ENCODE measurements at regions of chr3 and their contacts with region 1.

Region 1: GRCh38 chr3:45656575-45657363 is 32.4 kb upstream of the SACM1L start:
- DNase-seq: peak; percentile 89
- H3K4me3 Mint-ChIP-seq: no peak overlapping the region
- H3K27ac Mint-ChIP-seq: no peak overlapping the region
- H3K4me1 Mint-ChIP-seq: peaks cover 22% of the 10 kb centered on the region
- H3K27me3 Mint-ChIP-seq: no peaks in the 10 kb centered on the region

Region 2: DNA sequence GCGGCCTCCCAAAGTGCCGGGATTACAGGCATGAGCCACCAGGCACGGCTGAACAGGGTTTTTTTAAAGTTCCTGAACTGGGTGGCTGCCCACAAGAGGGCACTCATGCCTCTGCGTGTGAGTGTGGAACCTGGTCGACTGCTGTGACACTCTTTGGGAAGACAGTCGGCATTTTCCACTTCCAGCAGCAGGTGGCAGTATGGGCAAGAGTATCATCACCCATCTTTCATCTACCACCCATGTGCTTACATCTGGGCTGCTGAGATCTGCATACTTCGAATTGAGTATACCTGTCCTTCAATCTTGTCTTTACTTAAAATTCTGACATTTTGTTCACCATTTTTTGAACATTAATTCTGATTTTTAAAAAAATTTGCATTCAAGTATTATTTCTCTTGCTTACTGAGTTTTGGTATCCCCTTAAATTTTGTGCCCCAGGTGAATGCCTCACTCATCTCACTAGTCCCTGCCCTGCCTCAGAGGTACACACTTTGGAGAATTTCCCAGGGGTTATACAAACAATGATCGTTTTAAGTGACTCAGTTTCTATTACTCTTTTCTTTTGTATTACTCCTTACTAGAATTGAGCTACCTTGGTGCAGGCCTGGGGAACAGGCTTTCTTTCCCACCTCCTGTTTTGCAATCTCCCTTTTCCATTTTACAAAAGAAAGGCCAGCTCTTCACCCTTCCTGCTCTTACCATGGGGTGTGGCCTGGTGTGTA is 618.9 kb before region 1 on chr3:
- CTCF ChIA-PET with region 1: interaction called, 15 read pairs
- POLR2A ChIA-PET with region 1: interaction called, 3 read pairs
- DNase-seq: peak; percentile 94
- H3K4me3 Mint-ChIP-seq: no peak overlapping the region
- H3K27ac Mint-ChIP-seq: no peak overlapping the region
- H3K4me1 Mint-ChIP-seq: peaks cover 55% of the 10 kb centered on the region
- H3K27me3 Mint-ChIP-seq: peaks cover 32% of the 10 kb centered on the region

Region 3: DNA sequence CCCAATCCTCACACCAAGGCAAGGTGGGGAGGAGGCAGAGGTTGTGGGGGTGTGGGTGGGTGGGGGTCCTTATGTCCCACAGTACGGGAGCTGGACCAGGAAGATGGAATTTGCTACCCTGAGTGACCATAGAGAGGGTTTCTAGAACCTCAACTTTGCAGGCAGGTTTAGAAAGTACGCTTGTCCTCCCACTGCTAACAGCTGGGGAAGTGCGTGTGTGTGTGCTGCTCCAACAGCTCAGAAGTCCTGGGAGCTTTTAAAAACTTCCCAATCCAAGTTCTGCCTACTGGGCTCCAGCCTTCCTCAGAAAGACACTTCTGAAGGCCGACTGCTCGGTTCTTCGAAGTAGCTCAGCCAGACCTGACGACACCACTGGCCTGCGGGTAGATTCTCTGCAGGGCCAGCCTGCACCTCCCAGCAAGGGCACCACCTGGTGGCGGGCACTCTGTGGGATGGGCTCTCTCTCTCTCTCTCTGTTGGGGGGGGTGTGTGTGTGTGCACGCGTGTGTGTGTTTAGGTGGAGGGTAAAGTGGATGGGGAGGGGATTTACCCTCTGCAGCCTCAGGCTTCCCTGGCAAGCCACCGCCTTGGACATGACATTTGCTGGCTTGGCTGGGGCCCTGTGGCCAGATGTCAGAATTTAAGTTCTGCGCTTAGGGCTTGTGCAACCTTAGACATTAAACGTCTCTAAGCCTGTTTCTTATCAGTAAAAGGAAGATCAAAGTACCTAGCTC is 446.3 kb before region 1 on chr3:
- CTCF ChIA-PET with region 1: interaction called, 12 read pairs
- POLR2A ChIA-PET with region 1: no interaction called
- DNase-seq: peak; percentile 83
- H3K4me3 Mint-ChIP-seq: no peak overlapping the region
- H3K27ac Mint-ChIP-seq: no peak overlapping the region
- H3K4me1 Mint-ChIP-seq: peaks cover 29% of the 10 kb centered on the region
- H3K27me3 Mint-ChIP-seq: peaks cover 26% of the 10 kb centered on the region

Region 4: GRCh38 chr3:45513041-45513440 is 143.7 kb before region 1 on chr3:
- CTCF ChIA-PET with region 1: interaction called, 48 read pairs
- POLR2A ChIA-PET with region 1: interaction called, 4 read pairs
- DNase-seq: no peak
- H3K4me3 Mint-ChIP-seq: no peak overlapping the region
- H3K27ac Mint-ChIP-seq: no peak overlapping the region
- H3K4me1 Mint-ChIP-seq: no peaks in the 10 kb centered on the region
- H3K27me3 Mint-ChIP-seq: no peaks in the 10 kb centered on the region

Region 5: GRCh38 chr3:45583021-45583851 is 73.5 kb before region 1 on chr3:
- CTCF ChIA-PET with region 1: interaction called, 12 read pairs
- POLR2A ChIA-PET with region 1: no interaction called
- DNase-seq: no peak
- H3K4me3 Mint-ChIP-seq: no peak overlapping the region
- H3K27ac Mint-ChIP-seq: no peak overlapping the region
- H3K4me1 Mint-ChIP-seq: peaks cover 3% of the 10 kb centered on the region
- H3K27me3 Mint-ChIP-seq: peaks cover 3% of the 10 kb centered on the region

Region 6: DNA sequence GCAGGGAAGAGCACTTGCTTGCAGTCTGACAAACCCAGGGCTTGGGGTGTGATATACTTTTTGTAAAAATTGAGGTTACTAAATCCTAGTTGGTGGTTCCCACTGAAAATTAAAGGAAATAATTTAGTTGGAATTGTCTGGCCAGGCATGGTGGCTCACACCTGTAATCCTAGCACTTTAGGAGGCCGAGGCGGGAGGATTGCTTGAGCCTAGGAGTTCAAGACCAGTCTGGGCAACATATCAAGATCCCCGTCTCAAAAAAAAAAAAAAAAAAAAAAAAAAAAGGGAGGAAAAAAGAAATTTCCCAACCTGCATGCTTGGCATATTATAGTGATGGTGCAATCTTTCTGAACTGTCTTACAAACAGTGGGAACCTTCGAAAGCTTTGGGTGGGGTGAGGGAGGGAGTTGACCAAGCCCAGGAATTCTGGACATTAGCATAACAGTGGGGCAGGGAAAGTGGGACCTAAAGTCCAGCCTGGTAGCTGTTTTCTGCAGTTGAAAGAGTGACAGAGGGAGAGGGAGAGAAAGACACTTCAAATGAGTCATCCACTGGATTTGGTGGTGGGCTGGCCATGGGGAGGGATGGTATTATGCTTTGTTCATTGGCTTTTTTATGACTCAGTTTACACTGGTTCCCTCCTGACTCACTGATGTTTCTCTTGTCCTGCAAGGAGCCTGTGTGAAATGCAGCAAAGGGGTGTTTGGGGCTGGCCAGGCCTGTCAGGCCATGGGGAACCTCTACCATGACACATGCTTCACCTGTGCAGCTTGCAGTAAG is 21.1 kb before region 1 on chr3:
- CTCF ChIA-PET with region 1: interaction called, 15 read pairs
- POLR2A ChIA-PET with region 1: no interaction called
- DNase-seq: no peak
- H3K4me3 Mint-ChIP-seq: no peak overlapping the region
- H3K27ac Mint-ChIP-seq: no peak overlapping the region
- H3K4me1 Mint-ChIP-seq: peaks cover 19% of the 10 kb centered on the region
- H3K27me3 Mint-ChIP-seq: no peaks in the 10 kb centered on the region

Region 7: DNA sequence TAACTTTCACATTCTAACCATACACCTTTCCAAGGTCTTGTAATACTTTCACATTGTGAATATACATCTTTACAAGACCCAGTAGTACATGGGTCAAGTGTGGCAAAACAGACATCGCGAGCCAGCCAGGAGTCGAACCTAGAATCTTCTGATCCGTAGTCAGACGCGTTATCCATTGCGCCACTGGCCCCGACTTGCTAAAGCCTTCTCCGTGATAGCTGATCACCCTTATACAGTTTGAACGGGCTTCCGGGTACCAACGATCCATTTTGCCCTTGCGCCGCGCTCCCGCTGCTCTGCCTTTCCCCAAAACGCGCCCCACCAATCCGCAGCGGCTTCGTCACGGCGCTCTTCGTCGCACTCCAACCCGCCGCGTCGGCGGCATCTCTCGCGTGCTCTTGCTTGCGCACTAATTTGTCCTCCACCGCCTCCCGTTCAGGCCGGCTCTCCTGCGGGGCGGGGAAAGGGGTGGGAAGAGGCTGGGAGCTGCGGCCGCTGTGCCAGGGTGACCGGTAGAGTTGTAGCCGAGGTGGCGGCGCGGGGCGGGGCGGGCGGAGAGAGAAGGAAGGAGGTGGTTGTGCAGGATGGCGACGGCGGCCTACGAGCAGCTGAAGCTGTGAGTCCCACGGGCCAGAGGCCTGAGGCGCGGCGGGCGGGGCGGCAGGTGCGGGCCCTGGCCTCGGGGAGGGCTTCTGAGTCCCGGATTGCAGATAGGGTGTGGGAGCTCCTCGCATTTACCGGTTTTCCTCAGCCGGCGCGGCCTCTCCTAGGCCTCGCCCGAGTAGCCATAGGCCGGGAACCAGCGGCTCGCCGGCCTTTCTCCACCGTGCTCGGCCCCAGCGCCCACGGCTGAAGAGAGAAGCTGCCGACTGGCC is 32.4 kb after region 1 on chr3 and contains the start of gene SACM1L:
- CTCF ChIA-PET with region 1: interaction called, 16 read pairs
- POLR2A ChIA-PET with region 1: interaction called, 11 read pairs
- DNase-seq: peak; percentile 98
- H3K4me3 Mint-ChIP-seq: peak within 1 kb of the TSS; percentile 89
- H3K27ac Mint-ChIP-seq: peak within 1 kb of the TSS; percentile 92
- H3K4me1 Mint-ChIP-seq: peaks cover 49% of the 10 kb centered on the region
- H3K27me3 Mint-ChIP-seq: peaks cover 3% of the 10 kb centered on the region
- total RNA-seq, gene SACM1L: 101 to 103 TPM

Measured in activated CD4-positive, alpha-beta memory T cell treated with anti-CD3 and anti-CD28 coated beads, Interleukin-2, amount 10 ng/mL, durations not matched to agents 7 days and 5 days (primary cell).